ENCODE measurements at regions of chr5 and their contacts with region 1.

Region 1: GRCh38 chr5:153711755-153712154 is 221.3 kb downstream of the GRIA1 start:
- DNase-seq: no peak
- ATAC-seq: no peak

Region 2: DNA sequence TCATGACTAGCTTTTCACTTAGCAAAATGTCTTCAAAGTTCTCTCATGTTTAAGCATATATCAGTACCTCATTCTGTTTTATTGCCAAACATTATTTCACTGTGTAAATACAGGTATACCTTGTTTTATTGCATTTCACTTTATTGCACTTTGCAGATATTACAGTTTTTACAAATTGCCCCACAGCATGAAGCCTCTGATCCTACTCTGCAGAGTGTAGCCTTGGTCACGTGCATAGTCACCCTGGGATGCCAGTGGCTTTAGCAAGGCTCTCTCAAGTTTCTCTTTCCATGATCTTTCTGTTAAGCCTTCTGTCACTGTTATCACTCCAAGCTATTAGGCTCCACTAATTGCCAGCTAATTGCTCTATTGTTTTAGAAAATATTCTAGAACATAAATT is 403.5 kb before region 1 on chr5:
- intact Hi-C with region 1: no loop called
- DNase-seq: no peak
- ATAC-seq: no peak

Region 3: DNA sequence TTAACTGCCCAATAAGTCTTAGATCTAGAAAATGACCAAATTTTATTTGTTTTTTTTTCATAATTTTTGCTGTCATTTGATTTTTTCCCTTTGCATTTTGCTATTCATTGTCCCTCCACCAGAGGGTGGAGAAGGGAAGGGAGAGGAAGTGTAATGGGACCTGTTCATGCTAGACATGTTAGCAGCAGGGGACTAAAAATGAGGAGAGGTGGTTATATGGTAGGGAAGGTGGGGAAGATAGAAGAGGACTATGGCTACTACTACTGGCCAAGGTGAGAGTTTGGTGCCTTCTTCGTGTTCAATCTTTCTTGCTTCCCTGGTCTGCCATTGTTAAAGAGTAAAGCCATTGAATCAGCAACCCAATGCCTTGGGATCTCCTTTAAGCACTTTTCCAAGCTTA is 214.9 kb before region 1 on chr5:
- intact Hi-C with region 1: loop called (anchors 10 kb)
- DNase-seq: no peak
- ATAC-seq: peak; percentile 46

Region 4: DNA sequence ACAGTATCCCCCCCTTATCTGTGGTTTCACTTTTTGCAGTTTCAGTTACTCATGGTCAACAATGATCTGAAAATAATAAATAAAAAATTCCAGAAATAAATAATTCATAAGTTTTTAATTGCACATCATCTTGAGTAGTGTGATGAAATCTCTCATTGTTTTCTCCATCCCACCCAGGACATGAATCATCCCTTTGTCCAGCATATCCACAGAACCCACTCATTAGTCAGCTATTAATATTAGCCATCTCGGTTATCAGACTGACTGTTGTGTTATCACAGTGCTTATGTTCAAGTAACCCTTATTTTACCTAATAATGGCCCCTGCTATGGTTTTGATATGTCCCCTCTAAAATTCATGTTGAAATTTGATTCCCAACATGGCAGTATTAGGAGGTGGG is 286.3 kb after region 1 on chr5:
- intact Hi-C with region 1: no loop called
- DNase-seq: no peak
- ATAC-seq: no peak

Measured in left ventricle myocardium superior (tissue), 1 donor.